Head of caudate nucleus (tissue), 42 donors: ENCODE measurements at regions of chr1 and their contacts with region 1.

Region 1: DNA sequence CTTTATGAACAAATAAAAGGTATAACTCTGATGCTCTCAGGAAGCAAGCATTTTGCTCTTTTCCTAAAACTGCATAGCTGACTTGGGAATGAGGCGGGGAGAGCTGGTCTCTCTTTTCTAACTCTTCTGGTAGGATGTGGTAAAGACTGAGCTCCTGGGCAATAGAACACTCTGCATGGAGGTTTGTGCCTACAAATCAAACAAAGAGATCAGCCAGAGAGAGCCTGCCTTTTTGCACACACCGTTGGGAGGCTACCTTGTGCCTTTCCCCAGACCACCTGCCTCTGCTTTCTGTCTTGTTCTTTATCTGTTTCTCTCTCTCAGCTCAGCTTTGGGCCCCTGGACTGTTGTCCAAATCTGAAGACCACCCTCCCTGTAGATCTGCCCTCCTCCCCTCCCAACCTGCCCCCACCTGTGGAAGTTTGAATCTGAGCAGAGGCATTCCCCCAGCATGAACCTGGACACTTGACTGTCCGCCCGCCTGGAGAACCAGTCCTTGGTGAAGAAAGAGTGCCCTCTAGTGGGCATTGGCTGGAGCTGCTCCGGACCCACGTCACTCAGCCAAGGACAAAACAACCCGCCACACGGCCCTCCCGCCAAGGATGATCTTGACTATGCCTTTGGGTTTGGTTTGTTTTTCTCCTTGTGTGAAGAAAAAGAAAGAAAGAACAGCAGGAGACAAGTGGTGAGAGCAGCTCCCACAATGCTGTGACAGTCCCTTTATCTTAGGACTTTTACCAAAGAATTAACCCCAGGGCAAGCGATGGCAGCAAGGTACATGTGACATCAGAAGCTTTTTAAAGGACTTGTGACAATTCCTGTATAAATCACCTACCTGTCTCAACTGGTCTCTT is 228.2 kb downstream of the PBX1 start:
- DNase-seq: peak; percentile 71 to 95 (median 88)

Region 2: GRCh38 chr1:164261691-164262255 is 525.4 kb before region 1 on chr1:
- intact Hi-C with region 1: no loop called
- DNase-seq: no peak

Region 3: GRCh38 chr1:164558461-164559341 is 228.5 kb before region 1 on chr1 and contains the start of gene PBX1:
- intact Hi-C with region 1: loop called (anchors 2 kb)
- DNase-seq: peak; percentile 90 to 100 (median 98)

Region 4: GRCh38 chr1:164726235-164726634 is 61.0 kb before region 1 on chr1:
- intact Hi-C with region 1: loop called (anchors 10 kb)
- DNase-seq: no peak

Region 5: GRCh38 chr1:164858101-164858632 is 71.0 kb after region 1 on chr1:
- intact Hi-C with region 1: no loop called
- DNase-seq: no peak

Region 6: GRCh38 chr1:164971921-164972415 is 184.8 kb after region 1 on chr1:
- intact Hi-C with region 1: no loop called
- DNase-seq: no peak